B cell (primary cell): ENCODE measurements at regions of chr1 and their contacts with region 1.

Region 1: GRCh38 chr1:180178511-180179161 is 24.0 kb downstream of the QSOX1 start:
- DNase-seq: peak; percentile 69
- ATAC-seq: peak; percentile 74
- H3K4me3 ChIP-seq: no peak overlapping the region
- H3K4me3 Mint-ChIP-seq: no peak overlapping the region
- H3K27ac ChIP-seq: no peak overlapping the region
- H3K27ac Mint-ChIP-seq: no peak overlapping the region
- H3K4me1 ChIP-seq: no peaks in the 10 kb centered on the region
- H3K4me1 Mint-ChIP-seq: no peaks in the 10 kb centered on the region
- H3K27me3 ChIP-seq: no peaks in the 10 kb centered on the region
- H3K27me3 Mint-ChIP-seq: no peaks in the 10 kb centered on the region
- CTCF ChIP-seq: peak; percentile 96

Region 2: DNA sequence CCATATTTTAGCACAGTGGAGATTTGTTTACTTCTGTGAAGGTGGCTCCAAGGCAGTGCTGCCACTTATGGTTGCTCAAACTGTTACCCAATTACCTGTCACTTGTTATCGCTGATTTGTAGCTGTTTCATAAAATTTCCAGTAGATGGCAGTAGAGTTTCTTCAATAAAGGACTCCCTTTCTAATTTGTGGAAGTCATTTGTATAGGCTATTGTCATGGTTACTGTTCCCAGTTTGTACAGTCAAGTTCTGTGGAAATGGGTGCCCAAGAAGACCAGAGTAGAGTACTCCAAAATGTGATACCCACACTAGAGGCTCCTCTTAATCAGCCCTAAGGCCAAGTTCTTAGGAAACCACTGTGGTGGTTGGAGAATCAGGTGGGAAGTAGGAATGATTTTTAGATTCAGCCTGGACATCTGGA is 1867.9 kb before region 1 on chr1:
- CTCF ChIA-PET with region 1: interaction called, 4 read pairs
- POLR2A ChIA-PET with region 1: no interaction called
- intact Hi-C with region 1: loop called (anchors 5 kb)
- DNase-seq: peak; percentile 70
- ATAC-seq: peak; percentile 45
- H3K4me3 ChIP-seq: no peak overlapping the region
- H3K4me3 Mint-ChIP-seq: no peak overlapping the region
- H3K27ac ChIP-seq: no peak overlapping the region
- H3K27ac Mint-ChIP-seq: no peak overlapping the region
- H3K4me1 ChIP-seq: no peaks in the 10 kb centered on the region
- H3K4me1 Mint-ChIP-seq: no peaks in the 10 kb centered on the region
- H3K27me3 ChIP-seq: peaks cover 0 to 3% (median 0%) of the 10 kb centered on the region in 4 experiments
- H3K27me3 Mint-ChIP-seq: peaks cover 10% of the 10 kb centered on the region
- CTCF ChIP-seq: peak; percentile 82

Region 3: GRCh38 chr1:179809506-179810366 is 368.9 kb before region 1 on chr1:
- CTCF ChIA-PET with region 1: interaction called, 24 read pairs
- POLR2A ChIA-PET with region 1: interaction called, 4 read pairs
- intact Hi-C with region 1: loop called (anchors 2 kb)
- DNase-seq: peak; percentile 78
- ATAC-seq: peak; percentile 70
- H3K4me3 ChIP-seq: no peak overlapping the region
- H3K4me3 Mint-ChIP-seq: no peak overlapping the region
- H3K27ac ChIP-seq: no peak overlapping the region
- H3K27ac Mint-ChIP-seq: no peak overlapping the region
- H3K4me1 ChIP-seq: peaks cover 6 to 13% of the 10 kb centered on the region in 2 donors
- H3K4me1 Mint-ChIP-seq: peaks cover 7% of the 10 kb centered on the region
- H3K27me3 ChIP-seq: peaks cover 0 to 15% (median 4%) of the 10 kb centered on the region in 4 experiments
- H3K27me3 Mint-ChIP-seq: peaks cover 21% of the 10 kb centered on the region
- CTCF ChIP-seq: peak; percentile 90

Region 4: DNA sequence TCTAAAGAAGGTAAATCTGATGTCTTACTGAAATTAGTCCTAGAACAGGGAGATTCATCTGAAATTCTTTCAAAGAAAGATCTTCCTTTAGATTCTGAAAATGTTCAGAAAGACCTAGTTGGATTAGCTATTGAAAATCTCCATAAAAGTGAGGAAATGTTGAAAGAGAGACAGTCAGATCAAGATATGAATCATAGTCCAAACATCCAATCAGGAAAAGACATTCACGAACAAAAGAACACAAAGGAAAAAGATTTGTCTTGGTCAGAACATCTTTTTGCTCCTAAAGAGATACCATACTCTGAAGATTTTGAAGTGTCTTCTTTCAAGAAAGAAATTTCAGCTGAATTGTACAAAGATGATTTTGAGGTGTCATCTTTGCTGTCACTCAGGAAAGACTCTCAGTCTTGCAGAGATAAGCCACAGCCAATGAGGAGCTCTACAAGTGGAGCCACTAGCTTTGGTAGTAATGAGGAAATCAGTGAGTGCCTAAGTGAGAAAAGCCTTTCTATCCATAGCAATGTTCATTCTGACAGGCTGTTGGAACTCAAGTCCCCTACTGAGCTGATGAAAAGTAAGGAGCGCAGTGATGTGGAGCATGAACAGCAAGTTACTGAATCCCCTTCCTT is 85.6 kb before region 1 on chr1:
- CTCF ChIA-PET with region 1: interaction called, 12 read pairs
- POLR2A ChIA-PET with region 1: no interaction called
- intact Hi-C with region 1: no loop called
- DNase-seq: no peak
- ATAC-seq: no peak
- H3K4me3 ChIP-seq: no peak overlapping the region
- H3K4me3 Mint-ChIP-seq: no peak overlapping the region
- H3K27ac ChIP-seq: no peak overlapping the region
- H3K27ac Mint-ChIP-seq: no peak overlapping the region
- H3K4me1 ChIP-seq: no peaks in the 10 kb centered on the region
- H3K4me1 Mint-ChIP-seq: no peaks in the 10 kb centered on the region
- H3K27me3 ChIP-seq: no peaks in the 10 kb centered on the region
- H3K27me3 Mint-ChIP-seq: no peaks in the 10 kb centered on the region
- CTCF ChIP-seq: no peak

Region 5: GRCh38 chr1:180154325-180155181 is 24.1 kb before region 1 on chr1 and contains the start of gene QSOX1:
- CTCF ChIA-PET with region 1: interaction called, 16 read pairs
- POLR2A ChIA-PET with region 1: no interaction called
- intact Hi-C with region 1: no loop called
- DNase-seq: peak; percentile 91
- ATAC-seq: peak; percentile 96
- H3K4me3 ChIP-seq: peak within 1 kb of the TSS; percentile 58 to 89 (median 84)
- H3K4me3 Mint-ChIP-seq: peak within 1 kb of the TSS; percentile 96
- H3K27ac ChIP-seq: peak within 1 kb of the TSS; percentile 21 to 65
- H3K27ac Mint-ChIP-seq: peak within 1 kb of the TSS; percentile 86
- H3K4me1 ChIP-seq: peaks cover 22 to 25% of the 10 kb centered on the region in 2 donors
- H3K4me1 Mint-ChIP-seq: peaks cover 26% of the 10 kb centered on the region
- H3K27me3 ChIP-seq: no peaks in the 10 kb centered on the region
- H3K27me3 Mint-ChIP-seq: no peaks in the 10 kb centered on the region
- CTCF ChIP-seq: peak; percentile 9
- total RNA-seq, gene QSOX1: 16.9 and 20.6 TPM in 2 replicates